ENCODE measurements at regions of chr3 and their contacts with region 1.

Region 1: GRCh38 chr3:149273096-149273751 is 51.6 kb upstream of the CP start:
- DNase-seq: peak; percentile 90
- ATAC-seq: peak; percentile 77
- H3K4me3 ChIP-seq: no peak overlapping the region
- H3K27ac ChIP-seq: peak overlapping the region; percentile 91
- H3K4me1 ChIP-seq: peaks cover 19% of the 10 kb centered on the region
- H3K27me3 ChIP-seq: no peaks in the 10 kb centered on the region
- CTCF ChIP-seq: peak; percentile 95

Region 2: DNA sequence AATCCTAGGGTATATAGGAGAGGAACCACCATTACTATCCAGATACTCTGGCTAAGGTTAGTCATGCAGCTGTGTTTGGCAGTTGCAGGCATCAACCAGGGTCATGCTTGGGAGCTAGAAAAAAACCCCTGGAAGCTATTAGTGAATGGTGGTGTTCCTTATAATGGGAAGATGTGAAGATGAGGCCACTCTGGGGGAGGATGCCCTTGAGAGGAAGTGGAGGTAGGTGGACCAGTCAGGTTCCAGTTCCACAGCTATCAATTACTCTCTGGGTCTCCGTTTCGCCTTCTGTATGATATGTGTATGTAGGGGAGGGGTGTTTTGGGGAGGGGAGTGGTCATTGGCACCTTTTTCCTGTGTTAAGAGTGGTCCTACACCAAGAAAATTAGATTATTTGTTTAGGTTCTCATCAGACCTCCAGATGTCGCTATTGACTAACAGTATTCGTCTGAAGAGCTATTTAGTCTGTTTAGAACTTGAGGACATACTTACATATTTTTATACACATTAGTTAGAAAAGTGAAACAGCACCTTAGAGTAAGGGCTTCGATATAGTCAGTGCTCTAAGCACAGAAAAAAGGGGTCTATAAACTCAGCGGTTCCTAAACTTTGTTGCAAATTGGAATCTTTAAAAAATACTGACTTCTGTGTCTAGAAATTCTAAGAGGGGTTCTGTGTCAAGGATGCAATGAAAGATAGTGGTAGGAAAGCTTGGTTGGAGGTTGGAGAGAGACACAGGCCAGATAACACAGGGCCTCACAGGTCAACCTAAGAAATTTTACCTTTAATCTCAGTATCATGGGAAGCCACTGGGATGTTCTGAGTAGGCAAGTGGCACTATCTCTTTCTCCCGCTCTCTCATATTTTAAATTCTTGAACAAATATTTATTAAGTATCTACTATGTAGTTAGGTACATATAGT is 152.9 kb before region 1 on chr3:
- CTCF ChIA-PET with region 1: interaction called, 10 read pairs
- POLR2A ChIA-PET with region 1: no interaction called
- in situ Hi-C with region 1: no loop called
- intact Hi-C with region 1: loop called (anchors 1 kb)
- DNase-seq: peak; percentile 76
- ATAC-seq: peak; percentile 87
- H3K4me3 ChIP-seq: no peak overlapping the region
- H3K27ac ChIP-seq: peak overlapping the region; percentile 79
- H3K4me1 ChIP-seq: peaks cover 4% of the 10 kb centered on the region
- H3K27me3 ChIP-seq: no peaks in the 10 kb centered on the region
- CTCF ChIP-seq: peak; percentile 75

Region 3: DNA sequence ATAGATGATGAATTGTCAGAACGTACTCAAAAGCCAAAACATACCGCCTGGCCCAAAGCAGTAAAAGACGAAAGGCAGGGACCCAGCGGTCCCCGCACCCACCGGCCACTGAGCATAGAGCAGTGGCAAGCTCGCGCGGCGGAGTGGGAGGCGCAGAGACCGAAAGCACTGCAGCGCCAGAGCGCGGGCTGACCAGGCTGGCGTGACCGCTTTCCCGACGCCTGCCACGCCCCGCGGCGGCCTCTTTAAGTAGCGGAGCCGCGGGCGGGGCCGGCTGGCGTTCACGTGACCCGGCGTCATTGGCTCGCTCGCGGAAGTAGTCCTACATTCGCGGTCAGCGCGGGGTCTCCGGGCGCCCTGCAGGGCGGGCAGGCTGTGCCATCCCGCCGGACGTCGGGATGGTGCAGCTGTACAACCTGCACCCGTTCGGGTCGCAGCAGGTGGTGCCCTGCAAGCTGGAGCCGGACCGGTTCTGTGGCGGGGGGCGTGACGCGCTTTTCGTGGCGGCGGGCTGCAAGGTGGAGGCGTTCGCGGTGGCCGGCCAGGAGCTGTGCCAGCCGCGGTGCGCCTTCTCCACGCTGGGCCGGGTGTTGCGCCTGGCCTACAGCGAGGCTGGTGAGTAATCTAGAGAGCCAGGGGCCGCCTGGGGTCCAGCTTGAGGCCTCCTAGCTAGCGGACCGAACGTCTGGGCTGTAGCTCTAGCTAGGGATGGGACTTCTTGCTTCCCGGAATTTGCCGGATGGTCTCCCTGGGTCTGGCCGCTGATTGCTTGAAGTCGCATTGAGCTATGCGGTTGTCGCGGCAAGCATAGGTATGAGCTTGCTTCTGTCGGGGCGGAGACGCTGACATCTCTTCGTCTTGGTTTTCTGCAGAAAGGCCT is 143.7 kb before region 1 on chr3 and contains the start of gene HPS3:
- CTCF ChIA-PET with region 1: no interaction called
- POLR2A ChIA-PET with region 1: no interaction called
- in situ Hi-C with region 1: no loop called
- intact Hi-C with region 1: loop called (anchors 2 kb)
- DNase-seq: peak; percentile 54
- ATAC-seq: peak; percentile 93
- H3K4me3 ChIP-seq: peak within 1 kb of the TSS; percentile 71 to 92
- H3K27ac ChIP-seq: peak within 1 kb of the TSS; percentile 84
- H3K4me1 ChIP-seq: peaks cover 39% of the 10 kb centered on the region
- H3K27me3 ChIP-seq: no peaks in the 10 kb centered on the region
- CTCF ChIP-seq: no peak
- total RNA-seq, gene HPS3: 68.0 TPM

Region 4: GRCh38 chr3:149152420-149152819 is 120.8 kb before region 1 on chr3:
- CTCF ChIA-PET with region 1: no interaction called
- POLR2A ChIA-PET with region 1: no interaction called
- in situ Hi-C with region 1: no loop called
- intact Hi-C with region 1: no loop called
- DNase-seq: no peak
- ATAC-seq: no peak
- H3K4me3 ChIP-seq: no peak overlapping the region
- H3K27ac ChIP-seq: no peak overlapping the region
- H3K4me1 ChIP-seq: no peaks in the 10 kb centered on the region
- H3K27me3 ChIP-seq: no peaks in the 10 kb centered on the region
- CTCF ChIP-seq: no peak

Region 5: DNA sequence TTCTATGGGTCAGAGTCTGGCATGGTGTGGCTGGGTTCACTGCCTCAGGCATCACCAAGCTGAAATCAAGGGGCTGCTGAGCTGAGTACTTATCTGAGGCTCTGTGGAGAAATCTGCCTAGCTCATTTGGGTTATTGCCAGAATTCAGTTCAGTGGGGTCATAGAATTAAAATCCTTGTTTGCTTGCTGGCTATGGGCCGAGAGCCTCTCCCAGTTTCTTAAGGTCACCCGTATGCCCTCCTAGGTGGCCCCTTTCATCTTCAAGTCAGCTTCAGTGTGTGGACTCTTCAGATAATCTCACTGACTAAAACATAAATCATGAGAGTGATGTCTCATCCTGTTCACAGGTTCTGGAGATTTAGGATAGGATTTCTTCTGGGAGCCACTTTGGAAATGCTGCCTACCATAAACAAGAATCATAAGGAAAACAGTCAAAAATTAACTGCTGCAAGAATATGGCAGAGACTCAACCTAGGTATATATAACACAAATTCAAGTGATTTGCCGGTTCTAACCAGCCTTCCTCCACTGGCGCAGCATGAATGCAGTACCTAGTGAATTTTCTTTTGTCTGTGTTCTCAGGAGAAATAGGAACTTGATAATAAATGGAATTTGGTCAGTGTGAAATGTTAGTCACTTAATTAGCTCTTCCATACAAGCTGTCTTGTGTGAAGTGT is 56.9 kb before region 1 on chr3:
- CTCF ChIA-PET with region 1: no interaction called
- POLR2A ChIA-PET with region 1: interaction called, 12 read pairs
- in situ Hi-C with region 1: no loop called
- intact Hi-C with region 1: no loop called
- DNase-seq: no peak
- ATAC-seq: peak; percentile 79
- H3K4me3 ChIP-seq: no peak overlapping the region
- H3K27ac ChIP-seq: peak overlapping the region; percentile 77
- H3K4me1 ChIP-seq: peaks cover 38% of the 10 kb centered on the region
- H3K27me3 ChIP-seq: no peaks in the 10 kb centered on the region
- CTCF ChIP-seq: no peak

Region 6: GRCh38 chr3:149330609-149331331 is 57.5 kb after region 1 on chr3:
- CTCF ChIA-PET with region 1: no interaction called
- POLR2A ChIA-PET with region 1: no interaction called
- in situ Hi-C with region 1: no loop called
- intact Hi-C with region 1: loop called (anchors 1 kb)
- DNase-seq: no peak
- ATAC-seq: no peak
- H3K4me3 ChIP-seq: no peak overlapping the region
- H3K27ac ChIP-seq: peak overlapping the region; percentile 100
- H3K4me1 ChIP-seq: peaks cover 45% of the 10 kb centered on the region
- H3K27me3 ChIP-seq: no peaks in the 10 kb centered on the region
- CTCF ChIP-seq: no peak

Region 7: DNA sequence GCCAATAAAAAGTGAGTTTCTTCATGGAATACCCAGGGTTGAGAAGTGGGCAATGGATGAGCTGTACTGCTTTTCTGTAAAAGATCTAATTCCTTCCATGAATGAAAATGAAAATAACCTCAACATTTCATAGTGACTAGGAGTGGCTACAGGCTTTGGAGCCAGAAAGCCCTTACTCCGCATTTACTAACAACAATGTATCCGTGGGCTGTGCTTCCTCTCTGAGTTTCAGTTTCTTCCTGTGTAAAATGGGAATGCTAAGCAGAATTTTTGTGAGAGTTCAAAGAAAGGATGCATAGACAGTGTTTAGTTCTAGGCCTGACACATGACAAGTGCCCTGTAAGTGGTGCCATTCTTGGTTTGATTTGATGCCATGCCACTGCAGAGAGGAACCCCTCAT is 151.7 kb after region 1 on chr3:
- CTCF ChIA-PET with region 1: no interaction called
- POLR2A ChIA-PET with region 1: no interaction called
- in situ Hi-C with region 1: no loop called
- intact Hi-C with region 1: no loop called
- DNase-seq: no peak
- ATAC-seq: no peak
- H3K4me3 ChIP-seq: no peak overlapping the region
- H3K27ac ChIP-seq: no peak overlapping the region; the same call in 1 of the 2 replicates
- H3K4me1 ChIP-seq: no peaks in the 10 kb centered on the region
- H3K27me3 ChIP-seq: no peaks in the 10 kb centered on the region
- CTCF ChIP-seq: 0 out of 2 replicates have a peak, but pooled peaks have one; percentile 4

Measured in Panc1 (cell line).